ENCODE measurements at regions of chr20 and their contacts with region 1.

Region 1: DNA sequence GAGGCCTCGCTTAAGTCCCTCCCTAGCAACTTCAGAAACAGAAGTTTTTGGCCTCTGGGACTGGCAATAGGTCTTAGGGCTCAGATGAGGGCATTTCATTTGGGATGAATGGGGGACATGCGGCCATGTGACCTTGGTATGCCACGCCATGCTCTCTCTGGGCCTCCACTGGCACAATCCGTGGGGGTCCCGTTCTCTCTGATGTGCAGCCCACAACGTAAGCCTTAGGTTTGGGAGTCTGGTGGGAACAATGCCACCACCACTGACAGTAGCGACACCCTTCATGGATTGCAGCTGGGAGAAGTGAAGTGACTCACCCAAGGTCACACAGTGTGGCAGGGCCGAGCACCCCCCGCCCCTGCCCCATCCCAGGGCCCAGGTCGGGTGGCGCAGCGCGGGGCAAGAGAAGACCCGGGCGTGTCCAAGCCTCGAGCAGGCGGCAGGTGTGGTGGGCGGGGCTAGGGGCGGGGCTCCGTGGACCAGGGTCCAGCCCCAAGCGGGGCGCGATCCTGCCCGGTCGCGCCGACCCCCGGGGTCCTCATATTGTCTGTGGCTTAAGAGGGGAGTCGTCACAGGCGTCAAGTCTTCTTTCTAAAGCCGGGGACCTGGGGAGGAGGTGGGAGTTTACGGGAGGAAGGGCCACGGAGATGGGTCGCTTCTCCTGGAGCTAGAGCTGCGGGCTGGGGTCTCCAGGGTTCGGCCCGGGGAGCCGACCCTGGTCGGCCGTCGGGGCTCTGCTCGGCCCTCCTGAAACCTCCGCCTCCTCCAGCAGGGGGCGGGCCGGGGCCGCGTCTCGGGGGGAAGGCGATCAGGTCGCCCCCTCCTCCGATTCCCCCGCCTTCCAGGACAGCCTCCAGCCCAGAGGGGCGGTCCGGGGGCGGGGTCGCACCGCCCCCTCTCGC is 698 bp upstream of the CEBPB start:
- DNase-seq: peak; percentile 48 to 97 (median 74)

Region 2: DNA sequence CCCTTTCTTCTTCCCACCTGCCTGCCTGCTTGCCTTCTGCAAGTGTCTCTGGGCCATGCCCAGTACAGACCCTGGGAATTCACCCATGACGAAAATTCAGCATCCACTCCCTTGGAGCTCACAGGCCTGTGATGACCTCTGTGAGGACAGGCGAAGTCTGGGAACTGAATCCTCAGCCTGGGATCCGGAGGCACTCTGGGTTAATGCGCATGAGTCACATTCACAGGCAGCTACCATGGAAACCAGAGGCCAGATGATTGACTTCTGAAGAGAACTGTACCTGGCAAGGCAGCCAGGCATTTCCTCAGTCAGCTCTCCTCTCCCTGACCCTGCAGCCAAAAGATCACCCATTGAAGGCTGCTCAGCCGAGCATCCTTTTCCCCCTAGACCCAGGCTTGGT is 336.3 kb before region 1 on chr20:
- intact Hi-C with region 1: no loop called
- DNase-seq: no peak

Region 3: GRCh38 chr20:50460460-50461267 is 270.7 kb after region 1 on chr20:
- intact Hi-C with region 1: loop called (anchors 1 kb)
- DNase-seq: peak; percentile 44 to 96 (median 81)

Region 4: DNA sequence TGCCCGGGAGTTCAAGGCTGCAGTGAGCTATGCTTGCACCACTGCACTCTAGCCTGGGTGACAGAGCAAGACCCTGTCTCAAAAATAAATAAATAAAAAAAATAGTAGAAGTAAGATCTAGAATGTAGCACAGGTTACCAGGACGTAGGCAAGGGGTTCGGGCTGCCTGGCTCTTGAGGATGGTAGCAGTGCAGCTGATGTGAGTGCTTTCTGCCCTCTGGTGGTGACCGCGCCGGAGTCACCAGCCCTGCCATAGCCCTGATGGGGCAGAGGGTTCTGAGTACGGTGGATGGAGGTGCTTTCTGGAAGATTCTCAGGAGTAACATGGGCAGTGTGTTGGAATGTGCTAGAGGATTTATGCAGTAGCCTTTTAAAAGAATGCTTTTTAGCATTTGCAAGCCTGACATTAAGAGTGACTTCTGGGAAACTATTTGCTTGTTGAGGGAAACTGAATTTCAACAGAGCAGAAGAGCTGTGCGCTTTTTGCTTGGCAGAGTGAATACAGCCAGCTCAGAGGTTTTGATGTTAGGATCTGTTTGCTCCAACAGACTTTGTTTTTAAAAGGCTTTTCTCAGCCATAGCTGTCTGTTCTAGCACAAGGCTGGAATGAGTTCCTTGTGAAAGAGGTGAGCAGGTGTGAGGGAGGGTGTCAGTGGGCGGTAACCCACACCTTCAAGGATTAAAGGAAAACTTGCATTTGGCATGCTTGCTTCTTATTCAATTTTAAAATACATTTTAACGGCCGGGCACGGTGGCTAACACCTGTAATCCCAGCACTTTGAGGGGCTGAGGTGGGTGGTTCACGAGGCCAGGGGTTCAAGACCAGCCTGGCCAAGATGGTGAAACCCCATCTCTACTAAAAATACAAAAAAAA is 386.2 kb after region 1 on chr20:
- intact Hi-C with region 1: loop called (anchors 2 kb)
- DNase-seq: peak in 8 of 10 donors; percentile 58 to 94 (median 72)

Region 5: GRCh38 chr20:50744143-50744792 is 554.3 kb after region 1 on chr20:
- intact Hi-C with region 1: loop called (anchors 10 kb)
- DNase-seq: peak in 1 of 10 donors; percentile 14

Region 6: DNA sequence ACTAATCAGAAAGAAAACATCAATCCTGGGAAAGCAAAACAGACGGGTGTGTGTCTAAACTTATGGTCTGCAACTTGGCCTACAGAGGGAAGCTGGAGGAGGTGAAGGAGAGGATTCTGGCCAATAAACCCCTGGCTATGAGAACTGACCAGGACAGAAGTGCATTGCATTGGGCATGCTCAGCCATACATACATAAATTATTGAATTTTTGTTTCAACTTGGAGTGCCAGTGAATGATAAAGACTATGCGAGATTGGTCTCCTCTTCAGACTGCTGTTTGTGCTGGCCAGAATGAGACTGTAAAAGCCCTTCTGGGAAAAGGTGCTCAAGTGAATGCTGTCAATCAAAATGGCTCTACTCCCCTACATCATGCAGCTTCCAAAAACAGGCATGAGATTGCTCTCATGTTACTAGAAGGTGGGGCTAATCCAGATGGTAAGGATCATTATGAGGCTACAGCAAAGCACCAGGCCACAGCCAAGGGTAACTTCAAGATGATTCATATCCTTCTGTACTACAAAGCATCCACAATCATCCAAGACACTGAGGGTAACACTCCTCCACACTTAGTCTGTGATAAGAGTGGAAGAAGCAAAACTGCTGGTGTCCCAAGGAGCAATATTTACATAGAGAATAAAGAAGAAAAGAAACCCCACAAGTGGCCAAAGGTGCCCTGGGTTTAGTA is 723.9 kb after region 1 on chr20:
- intact Hi-C with region 1: no loop called
- DNase-seq: no peak

Measured in posterior cingulate gyrus (tissue), 11 donors.